Cardiac septum (tissue), 1 donor: ENCODE measurements at regions of chr9 and their contacts with region 1.

Region 1: GRCh38 chr9:11500780-11501179 is 888.0 kb upstream of the PTPRD start:
- DNase-seq: no peak

Region 2: DNA sequence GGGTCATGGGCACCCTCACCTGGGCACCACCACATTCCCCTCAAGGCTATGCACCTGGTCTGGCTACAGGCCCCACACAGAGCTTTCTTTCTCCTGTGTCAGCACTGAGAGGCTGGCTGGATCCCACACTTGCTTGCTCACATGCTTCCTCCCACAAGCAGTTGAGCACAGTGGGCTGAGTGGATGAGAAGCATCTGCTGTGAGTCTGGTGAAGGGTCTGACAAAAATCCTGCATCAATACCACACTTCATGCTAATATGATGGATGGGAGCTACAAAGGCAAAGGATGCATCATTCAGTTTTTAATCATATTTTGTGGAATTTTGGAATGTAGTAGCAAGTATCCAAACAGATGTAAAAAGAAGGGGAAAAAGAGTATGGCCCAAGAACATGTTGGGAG is 57.1 kb before region 1 on chr9:
- intact Hi-C with region 1: loop called (anchors 10 kb)
- DNase-seq: no peak